Aorta (tissue), 5 donors: ENCODE measurements at regions of chr1 and their contacts with region 1.

Region 1: DNA sequence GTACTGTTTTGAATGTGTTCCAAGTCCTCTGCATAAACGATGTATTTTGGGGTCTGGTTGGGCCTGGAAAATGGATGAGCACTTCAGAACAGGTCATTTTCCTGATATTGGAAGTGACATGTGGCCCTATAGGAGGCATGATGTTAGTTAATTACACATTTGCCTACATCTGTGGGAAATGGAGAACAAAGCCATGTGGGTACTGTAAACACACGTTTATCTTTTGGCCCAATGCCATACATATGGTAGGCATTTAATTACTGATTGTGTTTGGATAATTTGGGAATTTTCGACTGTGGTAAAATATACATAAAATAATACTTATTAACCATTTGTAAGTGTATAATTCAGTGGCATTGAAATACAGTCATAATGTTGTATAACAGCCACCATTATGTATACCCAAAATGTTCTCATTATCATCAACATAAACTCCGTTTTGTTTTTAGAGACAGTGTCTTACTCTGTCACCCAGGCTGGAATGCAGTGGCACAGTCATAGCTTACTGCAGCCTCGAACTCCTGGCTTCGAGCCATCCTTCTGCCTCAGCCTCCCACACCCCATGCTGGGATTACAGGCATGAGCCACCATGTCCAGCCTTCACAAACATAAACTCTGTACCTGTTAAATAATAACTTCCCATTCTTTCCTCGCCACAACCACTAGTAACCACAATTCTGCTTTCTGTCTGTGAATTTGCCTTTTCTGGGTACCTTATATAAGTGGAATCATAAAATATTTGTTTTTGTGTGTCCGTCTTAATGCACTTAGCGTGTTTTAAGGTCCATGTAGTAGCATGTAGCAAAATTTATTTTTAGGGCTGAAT is 11.9 kb upstream of the RNPEP start:
- DNase-seq: no peak
- ATAC-seq: no peak
- H3K4me3 ChIP-seq: no peak overlapping the region
- H3K27ac ChIP-seq: peak overlapping the region in 1 of 2 donors; percentile 40
- H3K4me1 ChIP-seq: no peaks in the 10 kb centered on the region
- H3K27me3 ChIP-seq: no peaks in the 10 kb centered on the region

Region 2: GRCh38 chr1:201828820-201829774 is 141.4 kb before region 1 on chr1 and contains the start of gene IPO9:
- intact Hi-C with region 1: loop called in 1 of 2 experiments (anchors 5 kb)
- DNase-seq: peak; percentile 96 to 98
- ATAC-seq: peak; percentile 95
- H3K4me3 ChIP-seq: peak within 1 kb of the TSS; percentile 62 to 93
- H3K27ac ChIP-seq: peak within 1 kb of the TSS; percentile 14 to 87
- H3K4me1 ChIP-seq: peaks cover 0 to 9% of the 10 kb centered on the region in 2 donors
- H3K27me3 ChIP-seq: no peaks in the 10 kb centered on the region
- total RNA-seq, gene IPO9: 36.6 to 45.0 TPM

Region 3: DNA sequence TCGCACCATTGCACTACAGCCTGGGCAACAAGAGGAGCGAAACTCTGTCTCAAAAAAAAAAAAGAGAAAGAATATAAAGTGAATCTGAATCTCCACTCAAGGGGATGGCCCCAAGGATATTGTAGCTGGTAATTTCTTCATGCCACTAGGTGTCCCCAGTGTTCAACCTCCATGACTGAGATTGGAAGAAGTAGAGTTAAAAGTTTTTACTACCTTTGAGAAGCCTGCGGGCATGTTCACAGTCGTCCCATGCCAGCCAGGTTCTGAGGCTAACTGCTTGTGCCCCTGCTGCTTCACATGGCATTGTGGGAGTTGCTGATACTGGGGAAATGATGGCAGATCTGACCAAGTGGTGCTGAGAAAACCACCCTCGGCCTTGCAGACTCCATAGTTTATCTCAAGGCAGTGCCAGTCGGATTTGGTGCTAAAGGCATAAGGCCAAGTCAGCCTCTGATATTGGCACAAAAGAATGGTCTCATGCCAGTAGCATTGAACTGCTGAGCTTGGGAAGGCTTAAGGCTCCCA is 92.6 kb before region 1 on chr1:
- intact Hi-C with region 1: loop called (anchors 1 to 2 kb)
- DNase-seq: no peak
- ATAC-seq: peak; percentile 84
- H3K4me3 ChIP-seq: no peak overlapping the region
- H3K27ac ChIP-seq: peak overlapping the region in 1 of 2 donors; percentile 7
- H3K4me1 ChIP-seq: peaks cover 0 to 2% of the 10 kb centered on the region in 2 donors
- H3K27me3 ChIP-seq: no peaks in the 10 kb centered on the region

Region 4: GRCh38 chr1:201895913-201896807 is 74.4 kb before region 1 on chr1:
- intact Hi-C with region 1: loop called in 1 of 2 experiments (anchors 2 kb)
- DNase-seq: peak; percentile 94 to 98
- ATAC-seq: peak; percentile 90
- H3K4me3 ChIP-seq: no peak overlapping the region
- H3K27ac ChIP-seq: peak overlapping the region; percentile 25 to 88
- H3K4me1 ChIP-seq: peaks cover 0 to 6% of the 10 kb centered on the region in 2 donors
- H3K27me3 ChIP-seq: no peaks in the 10 kb centered on the region